ENCODE measurements at regions of chr11 and their contacts with region 1.

Region 1: DNA sequence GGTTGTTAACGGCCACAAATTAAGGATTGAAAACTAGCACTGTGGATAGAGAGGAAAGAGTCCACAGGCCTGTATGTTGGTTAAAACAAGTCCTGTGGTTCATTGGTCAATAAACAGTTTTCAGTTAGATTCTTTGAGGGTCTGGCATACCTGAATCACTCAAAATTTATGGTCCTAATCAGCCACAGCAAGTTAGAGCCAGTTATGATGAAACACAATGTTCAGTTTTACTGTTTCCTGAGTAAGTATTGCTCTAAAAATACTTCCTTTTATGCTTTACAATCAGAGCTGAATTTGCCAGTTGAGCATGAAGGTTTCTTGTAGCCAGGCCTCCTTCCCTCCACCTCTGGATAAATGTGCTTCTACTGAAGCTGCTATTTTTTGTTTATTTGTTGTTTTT is 12.9 kb upstream of the CAT start:
- DNase-seq: no peak
- ATAC-seq: no peak
- H3K4me3 ChIP-seq: no peak overlapping the region
- H3K27ac ChIP-seq: no peak overlapping the region
- H3K4me1 ChIP-seq: peaks cover 0 to 43% (median 4%) of the 10 kb centered on the region in 9 donors
- H3K27me3 ChIP-seq: peaks cover 0 to 7% (median 0%) of the 10 kb centered on the region in 7 donors
- CTCF ChIP-seq: no peak

Region 2: DNA sequence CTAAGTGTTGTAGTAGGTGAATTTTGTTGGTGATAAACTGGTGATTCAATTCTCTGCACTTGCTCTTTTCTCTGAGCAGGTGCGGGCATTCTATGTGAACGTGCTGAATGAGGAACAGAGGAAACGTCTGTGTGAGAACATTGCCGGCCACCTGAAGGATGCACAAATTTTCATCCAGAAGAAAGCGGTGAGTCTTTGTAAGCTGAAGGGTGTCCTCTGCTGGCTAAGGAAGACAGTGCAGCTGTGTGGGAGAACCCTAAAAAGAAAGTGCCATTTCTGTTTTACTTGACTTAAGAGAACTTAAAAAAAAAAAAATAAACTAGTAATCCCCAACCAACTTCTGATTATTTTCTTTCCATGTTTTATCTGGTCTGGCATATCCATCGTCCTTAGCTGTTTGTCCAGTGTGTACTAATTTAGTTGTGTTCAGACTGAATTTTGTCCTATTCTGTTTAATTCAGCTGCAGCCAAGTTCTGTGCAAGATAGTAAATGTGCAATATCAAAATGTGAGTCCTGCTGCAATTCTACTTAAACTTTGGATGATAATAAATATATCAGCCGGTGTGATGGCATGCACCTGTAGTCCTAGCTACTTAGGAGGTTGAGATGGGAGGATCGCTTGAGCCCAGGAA is 42.5 kb after region 1 on chr11:
- intact Hi-C with region 1: loop called in 1 of 10 experiments (anchors 2 kb)
- DNase-seq: no peak
- ATAC-seq: no peak
- H3K4me3 ChIP-seq: no peak overlapping the region
- H3K27ac ChIP-seq: no peak overlapping the region
- H3K4me1 ChIP-seq: peaks cover 0 to 10% (median 0%) of the 10 kb centered on the region in 9 donors
- H3K27me3 ChIP-seq: no peaks in the 10 kb centered on the region
- CTCF ChIP-seq: peak; percentile 27 to 73 (median 56)

Region 3: DNA sequence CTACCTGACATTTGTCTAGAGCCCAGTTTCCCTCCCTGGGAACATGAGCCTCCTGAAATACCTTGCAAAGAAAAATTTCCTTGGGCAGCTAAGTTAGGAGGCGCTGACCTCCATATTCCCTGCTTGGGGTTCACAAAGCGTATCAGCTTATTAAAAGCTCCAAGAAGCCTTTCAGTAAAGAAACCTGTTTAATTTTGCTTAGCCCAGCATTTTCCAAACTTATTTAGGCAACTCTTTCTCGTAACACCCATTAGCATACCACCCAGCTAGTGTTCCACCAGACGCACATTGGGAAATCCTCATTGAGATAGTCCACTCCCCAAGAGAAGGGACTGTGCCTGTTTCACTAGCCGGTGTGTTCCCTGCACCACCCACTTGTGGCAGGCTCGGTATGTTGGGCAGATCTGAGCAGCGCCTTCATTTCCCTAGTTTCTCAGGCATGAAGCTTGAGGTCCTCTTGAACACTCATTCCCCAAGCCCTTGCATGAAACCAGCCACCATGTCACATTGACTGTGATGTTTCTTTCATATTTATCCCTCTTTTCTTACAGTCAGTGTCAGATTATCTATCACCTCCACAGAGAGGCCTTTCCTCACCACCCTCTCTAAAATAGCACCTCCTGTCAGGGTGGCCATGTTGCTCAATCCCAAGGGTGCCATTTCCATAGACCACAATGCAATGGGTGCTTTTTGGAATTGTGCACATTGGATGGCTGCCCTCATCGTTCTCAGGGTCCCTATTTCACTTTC is 100.2 kb after region 1 on chr11:
- intact Hi-C with region 1: no loop called
- DNase-seq: no peak
- ATAC-seq: no peak
- H3K4me3 ChIP-seq: no peak overlapping the region
- H3K27ac ChIP-seq: no peak overlapping the region
- H3K4me1 ChIP-seq: no peaks in the 10 kb centered on the region
- H3K27me3 ChIP-seq: peaks cover 0 to 24% (median 9%) of the 10 kb centered on the region in 7 donors
- CTCF ChIP-seq: no peak

Region 4: DNA sequence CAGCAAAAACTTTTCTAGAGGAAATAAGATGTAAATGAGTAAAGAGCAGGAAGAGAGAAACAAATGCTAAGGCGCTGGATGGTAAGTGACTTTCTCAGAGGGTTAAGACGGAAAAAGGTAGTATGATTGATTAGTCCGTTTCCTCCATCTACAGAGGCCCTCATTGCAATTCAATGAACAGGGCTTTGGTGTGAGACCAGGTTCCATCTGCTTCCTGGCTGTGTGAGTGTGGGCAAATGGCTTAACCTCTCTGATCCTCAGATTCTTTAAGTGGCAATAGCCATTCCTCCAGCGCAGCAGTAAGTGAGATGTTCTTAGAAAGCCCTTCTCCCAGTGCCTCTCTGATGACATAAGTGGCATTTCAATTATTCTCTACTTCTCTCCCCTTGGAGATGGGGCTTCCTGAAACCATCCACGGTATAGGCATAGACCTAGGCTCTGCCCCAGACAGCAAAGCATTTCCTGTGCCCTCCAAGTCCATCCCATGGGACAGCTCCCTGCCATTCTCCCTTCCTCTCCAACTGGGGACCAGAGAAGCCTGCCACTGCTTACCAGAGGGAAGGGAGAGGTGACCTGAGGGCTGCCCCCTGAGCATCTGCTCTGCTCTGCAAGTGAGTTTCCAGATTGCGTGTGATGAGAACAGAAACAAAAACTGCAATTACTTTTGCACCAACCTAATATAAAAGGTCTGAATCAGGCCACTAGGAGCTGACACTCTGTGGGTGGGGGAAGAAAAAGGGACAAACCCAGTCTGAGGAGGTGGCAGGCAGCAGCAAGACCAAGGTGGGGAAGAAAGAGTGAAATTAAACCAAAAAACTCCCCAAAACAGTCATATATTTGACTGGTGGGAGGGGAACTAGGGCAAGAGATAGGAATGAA is 700.4 kb after region 1 on chr11:
- intact Hi-C with region 1: no loop called
- DNase-seq: no peak
- ATAC-seq: no peak
- H3K4me3 ChIP-seq: no peak overlapping the region
- H3K27ac ChIP-seq: no peak overlapping the region
- H3K4me1 ChIP-seq: peaks cover 0 to 13% (median 0%) of the 10 kb centered on the region in 9 donors
- H3K27me3 ChIP-seq: no peaks in the 10 kb centered on the region
- CTCF ChIP-seq: no peak